ENCODE measurements at regions of chr1 and their contacts with region 1.

Region 1: GRCh38 chr1:90964444-90965035 is 57.3 kb downstream of the ZNF644 start:
- DNase-seq: no peak
- ATAC-seq: no peak
- H3K4me3 Mint-ChIP-seq: no peak overlapping the region
- H3K27ac Mint-ChIP-seq: no peak overlapping the region
- H3K4me1 Mint-ChIP-seq: peaks cover 38% of the 10 kb centered on the region
- H3K27me3 Mint-ChIP-seq: no peaks in the 10 kb centered on the region

Region 2: DNA sequence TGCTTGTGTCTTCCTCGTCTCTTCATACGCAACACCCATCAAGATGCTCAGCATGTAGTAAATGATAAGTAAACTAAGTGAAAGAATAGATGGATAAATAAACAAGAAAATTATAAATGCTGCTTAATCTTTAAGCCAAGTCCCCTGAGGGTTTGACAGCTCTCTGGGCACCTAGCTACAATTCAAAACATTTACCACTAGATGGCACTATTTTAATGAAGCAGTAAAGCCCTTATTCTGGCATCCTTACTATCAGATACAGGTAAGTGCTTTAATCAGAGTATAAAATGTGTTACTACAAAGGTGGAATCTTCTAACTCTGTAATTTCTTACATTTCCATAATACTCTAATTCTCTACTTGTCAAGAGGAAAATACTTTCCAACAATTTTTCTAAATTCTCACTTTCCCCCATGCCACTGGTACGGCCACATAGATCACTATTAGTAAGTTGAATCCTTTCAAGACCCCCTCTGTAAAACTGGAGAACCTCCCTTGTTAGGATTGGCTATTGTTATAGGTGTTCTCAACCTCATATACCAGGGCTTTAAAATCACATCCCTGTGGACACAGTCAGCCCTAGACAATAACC is 385.2 kb before region 1 on chr1:
- CTCF ChIA-PET with region 1: no interaction called
- POLR2A ChIA-PET with region 1: no interaction called
- intact Hi-C with region 1: loop called in 1 of 2 experiments (anchors 2 kb)
- DNase-seq: no peak
- ATAC-seq: peak; percentile 51
- H3K4me3 Mint-ChIP-seq: no peak overlapping the region
- H3K27ac Mint-ChIP-seq: no peak overlapping the region
- H3K4me1 Mint-ChIP-seq: no peaks in the 10 kb centered on the region
- H3K27me3 Mint-ChIP-seq: peaks cover 5% of the 10 kb centered on the region

Region 3: DNA sequence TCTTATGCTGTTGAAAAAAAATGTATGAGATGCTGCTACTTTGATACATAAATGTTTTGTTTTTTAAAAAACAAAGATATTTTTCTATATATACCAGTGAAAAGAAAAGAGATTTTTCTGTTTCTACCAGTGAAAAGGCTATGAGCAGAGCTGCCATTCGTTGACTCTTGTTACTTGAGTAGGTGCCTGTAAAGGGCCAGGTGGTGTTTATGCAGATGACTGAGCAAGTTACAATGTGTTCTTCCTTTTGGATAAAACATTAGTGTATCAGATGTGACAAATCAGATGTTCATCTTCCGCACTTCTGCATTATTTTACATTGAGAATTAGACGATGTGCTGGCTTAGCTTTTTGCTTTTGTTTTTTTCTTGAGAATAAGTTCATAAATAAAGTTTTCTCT is 292.8 kb before region 1 on chr1:
- CTCF ChIA-PET with region 1: no interaction called
- POLR2A ChIA-PET with region 1: no interaction called
- intact Hi-C with region 1: no loop called
- DNase-seq: no peak
- ATAC-seq: no peak
- H3K4me3 Mint-ChIP-seq: no peak overlapping the region
- H3K27ac Mint-ChIP-seq: no peak overlapping the region
- H3K4me1 Mint-ChIP-seq: no peaks in the 10 kb centered on the region
- H3K27me3 Mint-ChIP-seq: peaks cover 15% of the 10 kb centered on the region

Region 4: DNA sequence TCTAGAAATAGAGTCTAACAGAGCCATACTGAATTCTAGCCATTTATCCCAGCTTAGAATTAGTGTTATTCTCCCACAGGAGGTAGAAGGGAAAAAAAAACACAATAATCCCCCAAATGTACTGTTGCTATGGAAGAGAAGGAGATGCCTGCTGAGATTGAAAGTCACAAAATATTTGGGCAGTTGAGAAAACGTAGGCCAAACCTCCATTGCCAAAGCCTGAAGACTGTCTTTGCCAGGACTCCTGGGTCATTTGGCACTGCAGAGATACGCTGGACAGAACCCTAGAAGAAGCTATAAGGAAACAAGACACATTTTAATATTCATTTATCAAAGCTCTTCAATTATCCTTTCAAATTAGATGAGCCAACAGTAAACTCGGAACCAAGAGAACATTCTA is 269.7 kb before region 1 on chr1:
- CTCF ChIA-PET with region 1: no interaction called
- POLR2A ChIA-PET with region 1: no interaction called
- intact Hi-C with region 1: no loop called
- DNase-seq: no peak
- ATAC-seq: no peak
- H3K4me3 Mint-ChIP-seq: no peak overlapping the region
- H3K27ac Mint-ChIP-seq: no peak overlapping the region
- H3K4me1 Mint-ChIP-seq: no peaks in the 10 kb centered on the region
- H3K27me3 Mint-ChIP-seq: peaks cover 19% of the 10 kb centered on the region

Region 5: GRCh38 chr1:90707363-90707710 is 257.2 kb before region 1 on chr1:
- CTCF ChIA-PET with region 1: no interaction called
- POLR2A ChIA-PET with region 1: no interaction called
- intact Hi-C with region 1: no loop called
- DNase-seq: peak; percentile 46
- ATAC-seq: peak; percentile 26
- H3K4me3 Mint-ChIP-seq: peak overlapping the region; percentile 20
- H3K27ac Mint-ChIP-seq: no peak overlapping the region
- H3K4me1 Mint-ChIP-seq: peaks cover 10% of the 10 kb centered on the region
- H3K27me3 Mint-ChIP-seq: peaks cover 72% of the 10 kb centered on the region